Activated T-helper 2 cell treated with anti-CD3 and anti-CD28 coated beads, Interferon-gamma antibody, Interleukin-2, Interleukin-4, amounts not matched to agents 10 μg/mL and 5 μg/mL and 100 μg/mL, durations not matched to agents 14 hours and 24 hours and 36 hours (primary cell): ENCODE measurements at regions of chr1 and their contacts with region 1.

Region 1: GRCh38 chr1:201877877-201878401 is 10.8 kb upstream of the SHISA4 start:
- DNase-seq: no peak
- H3K4me3 Mint-ChIP-seq: no peak overlapping the region
- H3K27ac Mint-ChIP-seq: no peak overlapping the region
- H3K4me1 Mint-ChIP-seq: no peaks in the 10 kb centered on the region
- H3K27me3 Mint-ChIP-seq: no peaks in the 10 kb centered on the region

Region 2: DNA sequence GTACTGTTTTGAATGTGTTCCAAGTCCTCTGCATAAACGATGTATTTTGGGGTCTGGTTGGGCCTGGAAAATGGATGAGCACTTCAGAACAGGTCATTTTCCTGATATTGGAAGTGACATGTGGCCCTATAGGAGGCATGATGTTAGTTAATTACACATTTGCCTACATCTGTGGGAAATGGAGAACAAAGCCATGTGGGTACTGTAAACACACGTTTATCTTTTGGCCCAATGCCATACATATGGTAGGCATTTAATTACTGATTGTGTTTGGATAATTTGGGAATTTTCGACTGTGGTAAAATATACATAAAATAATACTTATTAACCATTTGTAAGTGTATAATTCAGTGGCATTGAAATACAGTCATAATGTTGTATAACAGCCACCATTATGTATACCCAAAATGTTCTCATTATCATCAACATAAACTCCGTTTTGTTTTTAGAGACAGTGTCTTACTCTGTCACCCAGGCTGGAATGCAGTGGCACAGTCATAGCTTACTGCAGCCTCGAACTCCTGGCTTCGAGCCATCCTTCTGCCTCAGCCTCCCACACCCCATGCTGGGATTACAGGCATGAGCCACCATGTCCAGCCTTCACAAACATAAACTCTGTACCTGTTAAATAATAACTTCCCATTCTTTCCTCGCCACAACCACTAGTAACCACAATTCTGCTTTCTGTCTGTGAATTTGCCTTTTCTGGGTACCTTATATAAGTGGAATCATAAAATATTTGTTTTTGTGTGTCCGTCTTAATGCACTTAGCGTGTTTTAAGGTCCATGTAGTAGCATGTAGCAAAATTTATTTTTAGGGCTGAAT is 92.6 kb after region 1 on chr1:
- intact Hi-C with region 1: loop called (anchors 5 kb)
- DNase-seq: no peak
- H3K4me3 Mint-ChIP-seq: no peak overlapping the region
- H3K27ac Mint-ChIP-seq: no peak overlapping the region
- H3K4me1 Mint-ChIP-seq: no peaks in the 10 kb centered on the region
- H3K27me3 Mint-ChIP-seq: peaks cover 5% of the 10 kb centered on the region